Left cardiac atrium (tissue), 4 donors: ENCODE measurements at regions of chr4 and their contacts with region 1.

Region 1: GRCh38 chr4:25234390-25235370 is 847 bp downstream of the PI4K2B start:
- DNase-seq: peak; percentile 51
- ATAC-seq: peak; percentile 78

Region 2: DNA sequence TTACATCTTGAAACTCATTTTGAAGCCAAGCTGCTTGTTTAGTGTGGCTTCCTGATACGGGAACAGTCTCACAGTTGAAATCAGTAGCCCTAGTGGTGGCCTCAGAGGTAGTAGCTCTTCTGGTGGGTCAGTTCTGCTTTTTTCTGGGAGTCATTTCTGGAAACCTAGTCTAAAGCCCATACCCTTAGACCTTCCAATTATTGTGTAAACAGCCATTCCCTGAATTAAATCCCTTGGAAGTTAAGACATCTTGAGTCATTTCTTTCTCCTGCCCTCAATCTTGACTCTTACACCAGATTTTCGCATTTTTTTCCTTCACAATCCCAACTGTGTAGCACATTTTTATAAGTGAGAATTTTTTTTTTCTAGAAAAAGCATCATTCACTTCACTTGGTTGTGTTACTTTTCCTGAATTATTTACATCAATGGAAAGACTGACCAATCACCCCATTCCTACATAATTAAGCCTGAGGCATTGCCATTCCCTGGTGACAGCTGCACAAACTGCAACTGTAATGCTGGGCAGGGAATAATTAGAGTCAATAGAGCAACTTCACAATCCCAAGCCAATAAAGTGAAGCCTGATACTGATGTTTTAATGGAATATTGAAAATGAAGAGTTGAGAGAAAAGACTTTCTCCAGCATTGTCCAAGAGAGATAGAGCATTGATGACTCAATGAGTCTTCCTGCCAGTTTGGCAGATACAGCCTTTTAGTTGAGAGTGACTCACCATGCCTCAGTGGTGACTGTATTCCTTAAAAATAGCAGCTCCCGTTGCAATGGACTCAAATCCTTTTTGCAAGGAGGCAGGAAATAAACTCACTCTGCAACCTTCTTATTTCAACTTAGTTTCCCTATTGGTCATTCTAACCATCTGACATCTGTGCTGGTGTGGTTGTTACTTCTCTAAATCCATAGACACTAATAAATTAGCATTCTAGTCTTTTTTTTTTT is 61.4 kb before region 1 on chr4:
- intact Hi-C with region 1: loop called in 1 of 2 experiments (anchors 5 kb)
- DNase-seq: peak; percentile 27
- ATAC-seq: peak; percentile 97 to 98

Region 3: DNA sequence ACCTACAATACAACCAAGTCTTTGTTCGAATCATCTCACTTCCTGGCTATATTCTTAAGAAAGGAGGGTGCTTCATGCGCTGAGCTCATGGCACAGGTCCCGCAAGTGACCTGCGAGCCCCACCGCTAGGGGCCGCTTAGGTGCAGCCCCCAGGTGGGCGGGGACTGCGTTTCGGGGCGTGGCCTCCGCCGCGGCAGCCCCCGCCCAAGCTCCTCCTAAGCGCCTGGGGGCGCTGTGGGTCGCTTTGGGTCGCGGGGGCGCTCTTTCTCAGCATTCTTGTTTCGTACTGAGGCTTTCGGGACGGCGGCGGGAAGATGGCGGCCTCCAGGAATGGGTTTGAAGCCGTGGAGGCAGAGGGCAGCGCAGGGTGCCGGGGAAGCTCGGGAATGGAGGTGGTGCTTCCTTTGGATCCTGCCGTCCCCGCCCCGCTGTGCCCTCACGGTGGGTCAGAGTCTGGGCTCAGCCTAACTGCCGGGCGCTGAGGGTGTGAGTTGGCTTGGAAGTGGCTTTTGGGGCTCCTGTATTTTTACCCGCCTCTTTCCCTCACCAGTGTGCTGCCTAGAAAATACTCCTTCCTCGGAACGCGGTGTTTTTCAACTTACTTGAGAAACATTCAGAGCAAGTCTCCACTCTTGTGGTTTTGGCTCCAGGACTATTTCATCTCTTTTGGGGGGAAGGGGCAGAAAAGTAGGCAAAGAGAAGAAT is 78.0 kb after region 1 on chr4 and contains the start of gene ZCCHC4:
- intact Hi-C with region 1: loop called in 1 of 2 experiments (anchors 5 kb)
- DNase-seq: peak; percentile 90
- ATAC-seq: peak; percentile 98
- total RNA-seq, gene ZCCHC4: 6.9 to 8.5 TPM

Region 4: GRCh38 chr4:25925486-25926201 is 691.0 kb after region 1 on chr4:
- intact Hi-C with region 1: no loop called
- DNase-seq: peak; percentile 47
- ATAC-seq: peak in 1 of 2 donors; percentile 47